ENCODE measurements at regions of chr4 and their contacts with region 1.

Region 1: GRCh38 chr4:163332500-163333406 is at the start of gene NPY1R:
- DNase-seq: peak; percentile 73
- ATAC-seq: peak; percentile 98
- H3K4me3 ChIP-seq: peak within 1 kb of the TSS; percentile 46
- H3K27ac ChIP-seq: no peak within 1 kb of the TSS
- H3K4me1 ChIP-seq: no peaks in the 10 kb centered on the region
- H3K27me3 ChIP-seq: peaks cover 19% of the 10 kb centered on the region
- CTCF ChIP-seq: peak; percentile 69
- POLR2A ChIP-seq: no peak
- RAD21 ChIP-seq: peak; percentile 71
- total RNA-seq, gene NPY1R: under 0.01 TPM in 2 replicates

Region 2: DNA sequence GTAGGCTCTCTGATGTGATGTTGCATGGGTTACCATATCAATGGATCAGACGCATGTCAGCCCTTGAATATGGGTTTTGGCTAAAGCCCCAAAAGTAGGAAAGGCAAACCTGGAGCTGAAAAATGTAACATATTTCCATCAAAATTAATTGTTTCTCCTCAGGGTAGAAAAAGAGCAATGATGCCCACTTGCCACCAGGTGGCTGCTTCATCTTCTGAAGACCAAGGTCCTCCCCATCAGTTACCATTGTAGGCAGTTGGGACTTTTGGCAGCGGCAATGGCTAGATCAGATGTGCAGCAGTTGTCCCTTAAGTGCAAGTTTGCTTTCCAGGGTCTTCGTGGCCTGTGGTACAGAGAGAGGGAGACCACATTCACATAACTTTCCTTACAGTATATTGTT is 284.3 kb before region 1 on chr4:
- CTCF ChIA-PET with region 1: no interaction called
- POLR2A ChIA-PET with region 1: no interaction called
- dilution Hi-C with region 1: no loop called
- in situ Hi-C with region 1: no loop called
- intact Hi-C with region 1: loop called (anchors 1 kb)
- DNase-seq: peak; percentile 19
- ATAC-seq: peak; percentile 51; the same call in 1 of the 2 replicates
- H3K4me3 ChIP-seq: no peak overlapping the region
- H3K27ac ChIP-seq: no peak overlapping the region
- H3K4me1 ChIP-seq: no peaks in the 10 kb centered on the region
- H3K27me3 ChIP-seq: no peaks in the 10 kb centered on the region
- CTCF ChIP-seq: peak; percentile 59
- POLR2A ChIP-seq: no peak
- RAD21 ChIP-seq: peak; percentile 53

Region 3: DNA sequence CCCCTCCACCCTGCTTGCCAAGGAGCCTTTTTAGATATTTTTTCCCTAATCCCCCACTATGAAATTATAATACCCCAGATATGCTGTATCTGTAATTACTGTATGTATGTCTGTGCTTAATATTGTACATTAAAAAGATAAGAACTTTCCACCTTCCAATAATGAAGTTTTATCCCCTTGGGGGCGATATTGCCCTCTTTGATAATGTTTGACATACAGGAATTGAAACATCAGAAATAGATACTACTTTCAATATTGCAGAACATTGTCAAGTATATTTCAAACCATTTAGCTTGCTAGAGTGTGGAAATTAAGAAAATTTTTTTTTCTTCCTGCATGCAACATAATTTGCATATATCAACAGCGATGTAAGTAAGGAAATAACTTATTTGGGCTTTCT is 225.0 kb before region 1 on chr4:
- CTCF ChIA-PET with region 1: no interaction called
- POLR2A ChIA-PET with region 1: no interaction called
- dilution Hi-C with region 1: no loop called
- in situ Hi-C with region 1: loop called (anchors 5 kb)
- intact Hi-C with region 1: loop called (anchors 1 kb)
- DNase-seq: peak; percentile 46
- ATAC-seq: peak; percentile 46; the same call in 1 of the 2 replicates
- H3K4me3 ChIP-seq: no peak overlapping the region
- H3K27ac ChIP-seq: no peak overlapping the region
- H3K4me1 ChIP-seq: no peaks in the 10 kb centered on the region
- H3K27me3 ChIP-seq: no peaks in the 10 kb centered on the region
- CTCF ChIP-seq: peak; percentile 54
- POLR2A ChIP-seq: no peak
- RAD21 ChIP-seq: peak; percentile 58

Region 4: GRCh38 chr4:163166041-163166579 is 166.6 kb before region 1 on chr4:
- CTCF ChIA-PET with region 1: no interaction called
- POLR2A ChIA-PET with region 1: no interaction called
- dilution Hi-C with region 1: no loop called
- in situ Hi-C with region 1: no loop called
- intact Hi-C with region 1: loop called (anchors 5 kb)
- DNase-seq: peak; percentile 33
- ATAC-seq: peak; percentile 56
- H3K4me3 ChIP-seq: peak overlapping the region; percentile 74
- H3K27ac ChIP-seq: peak overlapping the region; percentile 68
- H3K4me1 ChIP-seq: no peaks in the 10 kb centered on the region; the same call in 1 of the 2 replicates
- H3K27me3 ChIP-seq: no peaks in the 10 kb centered on the region
- CTCF ChIP-seq: no peak
- POLR2A ChIP-seq: peak; percentile 71; the same call in 1 of the 2 replicates
- RAD21 ChIP-seq: no peak

Region 5: GRCh38 chr4:164169591-164169990 is 836.8 kb after region 1 on chr4:
- CTCF ChIA-PET with region 1: no interaction called
- POLR2A ChIA-PET with region 1: no interaction called
- dilution Hi-C with region 1: no loop called
- in situ Hi-C with region 1: no loop called
- intact Hi-C with region 1: no loop called
- DNase-seq: peak; percentile 8
- ATAC-seq: no peak
- H3K4me3 ChIP-seq: no peak overlapping the region
- H3K27ac ChIP-seq: no peak overlapping the region
- H3K4me1 ChIP-seq: no peaks in the 10 kb centered on the region
- H3K27me3 ChIP-seq: no peaks in the 10 kb centered on the region
- CTCF ChIP-seq: no peak
- POLR2A ChIP-seq: no peak
- RAD21 ChIP-seq: no peak

Measured in IMR-90 (cell line).